ENCODE measurements at regions of chr22 and their contacts with region 1.

Region 1: GRCh38 chr22:40177738-40178416 is at the start of gene TNRC6B:
- DNase-seq: peak; percentile 95
- H3K4me3 Mint-ChIP-seq: peak within 1 kb of the TSS; percentile 80
- H3K27ac Mint-ChIP-seq: peak within 1 kb of the TSS; percentile 91
- H3K4me1 Mint-ChIP-seq: peaks cover 45% of the 10 kb centered on the region
- H3K27me3 Mint-ChIP-seq: no peaks in the 10 kb centered on the region
- total RNA-seq, gene TNRC6B: 27.3 and 31.3 TPM in 2 replicates

Region 2: GRCh38 chr22:39900306-39901227 is 277.3 kb before region 1 on chr22 and contains the start of gene GRAP2:
- intact Hi-C with region 1: loop called (anchors 10 kb)
- DNase-seq: peak; percentile 93
- H3K4me3 Mint-ChIP-seq: peak within 1 kb of the TSS; percentile 84
- H3K27ac Mint-ChIP-seq: peak within 1 kb of the TSS; percentile 82
- H3K4me1 Mint-ChIP-seq: peaks cover 24% of the 10 kb centered on the region
- H3K27me3 Mint-ChIP-seq: no peaks in the 10 kb centered on the region
- total RNA-seq, gene GRAP2: 34.4 and 38.4 TPM in 2 replicates

Region 3: DNA sequence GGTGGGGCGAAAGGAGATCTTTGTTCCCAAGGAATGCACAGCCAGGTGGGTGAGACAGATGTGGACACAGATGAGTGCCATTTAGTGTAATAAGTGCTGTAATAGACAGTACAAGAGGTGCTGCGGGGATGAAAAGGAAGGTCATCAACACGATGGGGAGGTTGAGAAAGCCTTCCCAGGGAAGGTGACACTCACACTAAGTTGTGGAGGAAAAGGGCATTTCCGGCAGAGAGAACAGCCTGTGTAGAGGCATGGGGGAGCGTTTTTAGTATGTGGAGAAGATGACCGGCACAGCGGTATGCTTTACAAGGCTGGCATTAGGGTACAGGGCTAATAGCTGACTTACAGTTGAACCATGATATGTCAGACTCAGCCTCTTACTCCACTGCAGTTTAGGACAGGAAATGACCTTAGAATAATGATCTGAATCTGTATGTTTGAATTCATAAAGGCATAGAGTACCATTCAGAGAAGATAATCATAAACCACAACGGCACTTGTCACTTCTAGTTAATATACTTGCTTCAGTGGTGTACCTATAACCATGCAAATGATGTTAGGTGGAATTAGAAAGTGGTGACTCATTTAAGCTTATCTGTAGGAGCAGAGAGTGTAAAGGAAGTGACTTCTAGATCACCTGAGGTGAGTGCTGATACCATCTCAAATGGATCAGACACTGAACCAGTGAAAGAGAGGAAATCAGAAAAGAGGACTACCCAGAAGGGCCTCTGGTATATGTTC is 122.6 kb before region 1 on chr22:
- intact Hi-C with region 1: loop called (anchors 2 kb)
- DNase-seq: peak; percentile 77
- H3K4me3 Mint-ChIP-seq: peak overlapping the region; percentile 71
- H3K27ac Mint-ChIP-seq: peak overlapping the region; percentile 95
- H3K4me1 Mint-ChIP-seq: peaks cover 57% of the 10 kb centered on the region
- H3K27me3 Mint-ChIP-seq: no peaks in the 10 kb centered on the region

Region 4: DNA sequence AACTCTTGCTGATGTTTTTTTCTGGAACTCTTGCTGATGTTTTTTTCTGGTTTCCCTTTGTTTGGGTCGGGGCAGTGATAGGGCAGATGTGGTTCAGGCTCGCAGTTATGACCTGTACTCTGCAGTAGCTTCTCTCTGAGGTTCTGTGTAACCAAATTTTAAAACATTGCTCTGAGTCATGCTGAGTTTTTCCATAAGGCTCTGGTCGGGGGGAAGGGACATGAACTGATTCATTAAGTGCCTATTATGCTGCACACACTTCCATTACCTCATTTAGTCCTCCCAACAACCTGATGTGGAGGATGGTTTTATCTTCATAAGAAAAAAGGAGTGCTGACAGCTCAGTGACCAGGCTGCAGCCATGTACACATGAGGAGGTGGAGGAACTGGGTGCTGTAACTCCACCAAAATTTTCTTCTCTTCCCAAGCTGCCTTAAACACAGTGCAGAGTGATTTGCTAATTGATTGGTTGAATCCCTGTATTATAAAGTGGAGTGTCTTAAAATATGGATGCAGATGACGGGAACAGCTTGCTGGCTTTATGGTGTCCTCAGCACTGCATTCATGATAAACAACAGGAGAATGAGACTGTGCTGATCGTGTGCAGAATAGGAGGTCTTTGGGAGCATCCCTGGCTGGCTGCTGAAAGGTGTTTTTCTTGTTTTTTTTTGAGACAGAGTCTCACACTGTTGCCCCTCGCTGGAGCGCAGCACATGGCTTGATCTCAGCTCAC is 18.9 kb after region 1 on chr22:
- intact Hi-C with region 1: loop called (anchors 1 kb)
- DNase-seq: no peak
- H3K4me3 Mint-ChIP-seq: peak overlapping the region; percentile 48
- H3K27ac Mint-ChIP-seq: peak overlapping the region; percentile 85
- H3K4me1 Mint-ChIP-seq: peaks cover 45% of the 10 kb centered on the region
- H3K27me3 Mint-ChIP-seq: no peaks in the 10 kb centered on the region

Region 5: DNA sequence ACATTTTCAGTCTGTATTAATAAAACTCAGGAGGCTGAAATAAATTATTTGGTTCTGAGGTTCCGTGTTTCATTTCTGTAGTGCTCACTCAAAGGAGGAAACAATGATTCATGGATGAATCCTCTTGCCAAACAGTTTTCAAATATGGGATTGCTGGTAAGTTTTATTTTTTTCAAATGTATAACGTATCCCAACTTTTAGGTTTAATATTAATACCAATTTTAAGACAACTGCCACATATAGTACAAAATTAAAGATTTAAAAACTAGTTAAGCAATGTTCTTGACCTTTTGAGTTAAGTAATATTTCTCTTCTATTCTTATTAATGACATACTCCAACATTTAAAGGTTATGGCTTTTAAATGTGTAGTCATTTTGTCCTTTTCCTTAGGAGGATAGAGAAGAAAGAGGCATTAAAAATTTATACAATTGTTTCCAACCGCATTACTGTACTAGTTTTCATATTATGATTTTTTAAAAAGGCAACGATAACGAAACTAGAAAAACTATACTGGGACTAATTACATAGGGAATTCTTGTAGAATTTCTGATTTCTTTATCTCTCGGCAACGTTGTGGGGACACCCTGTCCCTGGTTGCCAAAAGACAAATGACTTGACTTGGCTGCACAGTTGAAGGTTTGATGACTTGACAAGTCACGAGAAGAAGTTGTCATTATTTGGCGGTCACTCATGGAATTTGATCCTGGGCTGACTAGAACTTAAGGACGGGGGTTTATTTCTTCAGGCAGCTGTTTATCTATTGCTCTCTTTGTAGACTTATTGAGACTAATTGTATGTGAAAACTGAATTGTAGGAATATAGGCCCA is 99.3 kb after region 1 on chr22:
- intact Hi-C with region 1: loop called (anchors 1 kb)
- DNase-seq: no peak
- H3K4me3 Mint-ChIP-seq: no peak overlapping the region
- H3K27ac Mint-ChIP-seq: peak overlapping the region; percentile 9
- H3K4me1 Mint-ChIP-seq: peaks cover 25% of the 10 kb centered on the region
- H3K27me3 Mint-ChIP-seq: no peaks in the 10 kb centered on the region

Region 6: GRCh38 chr22:41091132-41092022 is 913.5 kb after region 1 on chr22:
- intact Hi-C with region 1: loop called (anchors 5 kb)
- DNase-seq: peak; percentile 99
- H3K4me3 Mint-ChIP-seq: peak overlapping the region; percentile 90
- H3K27ac Mint-ChIP-seq: peak overlapping the region; percentile 99
- H3K4me1 Mint-ChIP-seq: peaks cover 26% of the 10 kb centered on the region
- H3K27me3 Mint-ChIP-seq: no peaks in the 10 kb centered on the region